ENCODE measurements at regions of chr9 and their contacts with region 1.

Region 1: DNA sequence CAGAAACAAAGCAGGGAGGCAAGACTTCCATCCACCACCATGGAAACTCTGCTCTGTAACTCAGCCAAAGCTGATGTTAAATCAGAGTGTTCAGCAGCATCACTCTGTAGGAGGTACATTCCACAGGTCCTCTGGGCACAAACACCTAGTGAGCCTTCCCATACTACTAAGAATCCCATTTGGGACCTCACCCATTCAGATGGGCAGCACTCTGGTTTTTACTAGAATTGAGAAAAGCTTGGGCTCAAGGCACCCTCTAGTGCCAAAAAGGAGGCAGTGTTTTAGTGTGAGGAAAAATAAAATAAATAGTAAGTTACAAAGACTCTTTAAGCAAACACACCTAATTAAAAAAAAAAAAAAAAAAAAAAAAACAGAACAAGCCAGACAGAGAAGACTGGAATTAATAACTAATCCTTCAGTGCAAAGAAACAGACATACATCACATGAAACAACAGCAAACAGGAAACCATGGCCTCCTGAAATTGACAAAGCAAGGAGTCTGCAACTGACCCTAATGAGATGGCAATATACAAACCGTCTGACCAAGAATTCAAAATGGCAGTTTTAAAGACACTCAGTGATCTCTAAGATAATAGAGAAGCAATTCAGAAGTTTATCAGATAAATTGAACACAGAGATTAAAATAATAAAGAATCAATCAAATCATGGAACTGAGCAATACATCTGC is 159.5 kb downstream of the GNA14 start:
- DNase-seq: no peak
- H3K4me3 ChIP-seq: no peak overlapping the region
- H3K27ac ChIP-seq: no peak overlapping the region
- H3K4me1 ChIP-seq: no peaks in the 10 kb centered on the region; a peak in 2 of 7 replicates
- H3K27me3 ChIP-seq: no peaks in the 10 kb centered on the region
- CTCF ChIP-seq: peak in 2 of 3 experiments; percentile 53 to 57; a peak in 3 of 4 replicates
- EP300 ChIP-seq: no peak
- POLR2A ChIP-seq: no peak
- RAD21 ChIP-seq: peak; percentile 80 to 81

Region 2: DNA sequence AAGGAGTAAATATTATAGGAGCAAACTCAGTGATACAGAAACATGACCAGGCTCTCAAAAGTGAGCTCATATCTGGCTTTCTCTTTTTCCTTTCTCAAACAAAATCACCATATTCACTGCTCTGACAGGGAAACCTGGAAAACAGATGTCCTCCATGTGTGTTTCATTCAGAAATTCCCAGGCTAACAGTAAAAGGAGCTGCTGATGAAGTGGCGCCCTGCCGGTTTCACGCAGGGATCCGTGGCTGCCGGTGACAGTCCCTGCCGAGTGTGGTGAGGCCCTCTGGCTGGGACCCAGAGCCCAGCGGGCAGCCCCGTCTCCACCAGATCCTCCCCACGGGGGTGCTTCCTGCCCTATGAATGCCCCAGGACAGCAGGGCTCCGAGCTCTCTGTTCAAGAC is 48.5 kb before region 1 on chr9:
- CTCF ChIA-PET with region 1: interaction called, 42 read pairs
- POLR2A ChIA-PET with region 1: interaction called, 6 read pairs
- DNase-seq: peak in 1 of 2 experiments; percentile 64
- H3K4me3 ChIP-seq: peak overlapping the region in 1 of 4 experiments; percentile 29; a peak in 1 of 8 replicates
- H3K27ac ChIP-seq: no peak overlapping the region
- H3K4me1 ChIP-seq: peaks cover 0 to 6% (median 4%) of the 10 kb centered on the region in 4 experiments; a peak in 5 of 7 replicates
- H3K27me3 ChIP-seq: no peaks in the 10 kb centered on the region
- CTCF ChIP-seq: no peak
- EP300 ChIP-seq: no peak
- POLR2A ChIP-seq: no peak
- RAD21 ChIP-seq: no peak

Region 3: DNA sequence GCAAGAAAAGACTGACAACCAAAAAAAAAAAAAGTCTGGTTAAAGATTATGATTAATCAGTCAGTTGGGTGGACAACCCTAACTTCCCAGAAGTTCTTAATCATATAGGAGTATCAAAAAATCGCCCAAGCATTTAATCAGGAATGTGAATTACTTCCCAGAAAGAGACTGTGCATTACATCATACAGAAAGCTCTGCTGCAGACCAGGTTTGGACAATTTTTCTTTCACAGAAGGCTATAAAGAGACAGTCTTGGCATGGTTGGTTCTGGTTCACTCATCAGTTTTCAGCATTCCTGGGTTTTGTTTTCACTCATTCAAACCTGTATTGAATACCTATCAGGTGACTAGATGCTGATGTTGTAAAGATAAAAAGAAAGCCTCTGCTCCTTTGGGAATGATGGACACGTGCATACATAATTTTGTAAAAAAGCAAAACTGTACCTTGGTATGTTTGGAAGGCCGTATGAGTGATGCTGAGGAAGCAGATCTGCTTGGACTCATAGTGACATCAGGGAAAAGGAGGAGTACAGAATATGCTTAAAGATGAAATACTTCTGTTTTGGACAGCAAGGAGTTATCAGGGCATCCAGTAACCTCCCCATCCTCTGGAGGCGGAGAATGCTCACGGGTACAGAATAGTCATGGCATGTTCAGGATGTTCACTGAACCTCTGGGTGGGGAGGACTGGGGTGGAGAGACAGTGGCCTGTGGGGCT is 18.9 kb before region 1 on chr9:
- CTCF ChIA-PET with region 1: interaction called, 20 read pairs
- POLR2A ChIA-PET with region 1: no interaction called
- DNase-seq: no peak
- H3K4me3 ChIP-seq: no peak overlapping the region
- H3K27ac ChIP-seq: no peak overlapping the region
- H3K4me1 ChIP-seq: peaks cover 0 to 6% (median 0%) of the 10 kb centered on the region in 4 experiments; a peak in 2 of 7 replicates
- H3K27me3 ChIP-seq: no peaks in the 10 kb centered on the region
- CTCF ChIP-seq: no peak
- EP300 ChIP-seq: no peak
- POLR2A ChIP-seq: no peak
- RAD21 ChIP-seq: no peak

Region 4: DNA sequence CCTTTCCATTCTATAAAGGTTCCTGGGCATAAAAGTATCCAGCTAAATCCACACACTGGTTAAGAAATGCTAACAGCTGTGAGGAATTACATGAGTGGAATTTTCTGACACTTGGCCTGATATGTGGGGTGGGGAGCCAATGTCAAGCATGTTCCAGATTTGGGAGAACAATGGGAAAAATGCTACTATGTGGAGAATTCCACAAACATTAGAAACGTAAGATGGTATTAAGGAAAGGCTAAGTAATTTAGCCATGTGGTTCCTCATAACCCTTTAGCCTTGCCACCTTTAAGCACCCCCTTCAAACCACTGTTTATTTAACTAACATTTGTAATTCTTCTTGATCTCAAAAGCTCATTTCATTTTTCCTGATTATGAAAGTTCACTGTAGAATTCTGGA is 10.3 kb after region 1 on chr9:
- CTCF ChIA-PET with region 1: interaction called, 13 read pairs
- POLR2A ChIA-PET with region 1: no interaction called
- DNase-seq: no peak
- H3K4me3 ChIP-seq: no peak overlapping the region
- H3K27ac ChIP-seq: no peak overlapping the region
- H3K4me1 ChIP-seq: no peaks in the 10 kb centered on the region; a peak in 2 of 7 replicates
- H3K27me3 ChIP-seq: no peaks in the 10 kb centered on the region
- CTCF ChIP-seq: no peak
- EP300 ChIP-seq: no peak
- POLR2A ChIP-seq: no peak
- RAD21 ChIP-seq: no peak

Region 5: GRCh38 chr9:77534376-77535057 is 45.9 kb after region 1 on chr9:
- CTCF ChIA-PET with region 1: no interaction called
- POLR2A ChIA-PET with region 1: no interaction called
- DNase-seq: no peak
- H3K4me3 ChIP-seq: no peak overlapping the region
- H3K27ac ChIP-seq: peak overlapping the region; percentile 48; the same call in 1 of the 2 replicates
- H3K4me1 ChIP-seq: peaks cover 3 to 14% (median 8%) of the 10 kb centered on the region in 4 experiments; a peak in 6 of 7 replicates
- H3K27me3 ChIP-seq: no peaks in the 10 kb centered on the region
- CTCF ChIP-seq: no peak
- EP300 ChIP-seq: no peak
- POLR2A ChIP-seq: no peak
- RAD21 ChIP-seq: no peak

Region 6: GRCh38 chr9:77569173-77569734 is 80.7 kb after region 1 on chr9:
- CTCF ChIA-PET with region 1: no interaction called
- POLR2A ChIA-PET with region 1: no interaction called
- DNase-seq: no peak
- H3K4me3 ChIP-seq: no peak overlapping the region
- H3K27ac ChIP-seq: no peak overlapping the region
- H3K4me1 ChIP-seq: no peaks in the 10 kb centered on the region
- H3K27me3 ChIP-seq: no peaks in the 10 kb centered on the region
- CTCF ChIP-seq: no peak
- EP300 ChIP-seq: no peak
- POLR2A ChIP-seq: no peak
- RAD21 ChIP-seq: no peak